PC-9 (cell line): ENCODE measurements at regions of chr12 and their contacts with region 1.

Region 1: GRCh38 chr12:122225683-122226407 is at the start of gene DIABLO:
- DNase-seq: peak; percentile 96 to 100
- H3K4me3 ChIP-seq: peak within 1 kb of the TSS; percentile 97
- H3K27ac ChIP-seq: peak within 1 kb of the TSS; percentile 74
- H3K4me1 ChIP-seq: peaks cover 21% of the 10 kb centered on the region
- H3K27me3 ChIP-seq: no peaks in the 10 kb centered on the region
- CTCF ChIP-seq: no peak
- total RNA-seq, gene DIABLO: 47.9 and 51.7 TPM in 2 replicates

Region 2: DNA sequence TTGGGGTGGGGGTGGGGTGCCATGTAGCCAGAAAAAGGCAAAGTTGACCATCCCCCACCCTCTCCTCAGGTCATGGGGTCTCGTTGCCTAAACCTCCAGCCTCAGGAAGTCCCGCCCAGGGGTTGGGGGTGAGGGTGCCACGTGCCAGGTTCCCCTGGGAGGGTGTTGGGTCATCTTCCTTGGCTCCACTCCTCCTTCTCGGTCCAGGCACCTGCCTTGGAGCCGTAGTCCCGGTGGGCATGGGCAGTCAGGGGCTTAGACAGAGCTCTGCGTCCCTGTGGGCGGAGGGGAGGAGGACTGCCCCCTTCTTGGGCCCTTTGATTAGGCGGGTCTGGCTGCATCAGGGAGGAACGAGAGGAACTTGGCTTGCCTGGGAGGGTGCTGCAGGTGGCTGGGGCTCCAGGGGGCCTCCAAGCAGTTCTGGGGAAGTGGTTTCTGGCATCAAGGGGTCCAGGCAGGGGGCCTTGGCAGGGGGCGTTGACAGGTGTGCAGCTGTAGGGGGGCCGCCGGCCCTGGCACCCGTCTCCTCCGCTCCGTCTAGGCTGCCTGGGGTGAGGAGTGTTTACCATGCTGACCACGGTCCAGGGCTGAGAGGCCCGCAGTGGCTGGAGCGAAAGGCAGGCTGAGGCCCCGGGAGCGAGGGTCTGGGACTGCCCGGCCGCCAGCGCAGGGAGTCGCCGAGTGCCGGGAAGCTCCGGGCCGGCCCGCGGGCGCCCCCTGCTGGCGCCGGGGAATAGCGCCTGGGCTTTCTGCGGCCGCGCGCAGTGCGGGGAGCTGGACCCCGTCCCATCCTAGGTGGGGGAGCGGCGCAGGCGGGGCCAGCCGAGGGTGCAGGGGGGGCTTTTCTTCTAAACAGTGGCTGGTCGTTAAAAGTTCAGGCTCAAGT is 414.2 kb before region 1 on chr12:
- CTCF ChIA-PET with region 1: interaction called, 10 read pairs
- POLR2A ChIA-PET with region 1: no interaction called
- intact Hi-C with region 1: no loop called
- DNase-seq: peak in 1 of 2 experiments; percentile 80
- H3K4me3 ChIP-seq: peak overlapping the region; percentile 65
- H3K27ac ChIP-seq: 0 out of 2 replicates have a peak overlapping the region, but pooled peaks have one; percentile 37
- H3K4me1 ChIP-seq: peaks cover 16% of the 10 kb centered on the region
- H3K27me3 ChIP-seq: no peaks in the 10 kb centered on the region
- CTCF ChIP-seq: peak; percentile 92

Region 3: GRCh38 chr12:121858662-121859572 is 366.9 kb before region 1 on chr12 and contains the start of gene HPD:
- CTCF ChIA-PET with region 1: no interaction called
- POLR2A ChIA-PET with region 1: no interaction called
- intact Hi-C with region 1: no loop called
- DNase-seq: peak; percentile 40 to 55
- H3K4me3 ChIP-seq: no peak within 1 kb of the TSS
- H3K27ac ChIP-seq: no peak within 1 kb of the TSS
- H3K4me1 ChIP-seq: no peaks in the 10 kb centered on the region
- H3K27me3 ChIP-seq: no peaks in the 10 kb centered on the region
- CTCF ChIP-seq: no peak
- total RNA-seq, gene HPD: 0.35 and 0.92 TPM in 2 replicates

Region 4: GRCh38 chr12:121955258-121956235 is 270.3 kb before region 1 on chr12:
- CTCF ChIA-PET with region 1: no interaction called
- POLR2A ChIA-PET with region 1: interaction called, 46 read pairs
- intact Hi-C with region 1: no loop called
- DNase-seq: no peak
- H3K4me3 ChIP-seq: no peak overlapping the region
- H3K27ac ChIP-seq: no peak overlapping the region
- H3K4me1 ChIP-seq: no peaks in the 10 kb centered on the region
- H3K27me3 ChIP-seq: no peaks in the 10 kb centered on the region
- CTCF ChIP-seq: peak; percentile 65

Region 5: GRCh38 chr12:122244565-122245371 is 18.9 kb after region 1 on chr12:
- CTCF ChIA-PET with region 1: no interaction called
- POLR2A ChIA-PET with region 1: no interaction called
- intact Hi-C with region 1: no loop called
- DNase-seq: no peak
- H3K4me3 ChIP-seq: no peak overlapping the region
- H3K27ac ChIP-seq: no peak overlapping the region
- H3K4me1 ChIP-seq: no peaks in the 10 kb centered on the region
- H3K27me3 ChIP-seq: no peaks in the 10 kb centered on the region
- CTCF ChIP-seq: no peak

Region 6: GRCh38 chr12:122393817-122394216 is 168.0 kb after region 1 on chr12:
- CTCF ChIA-PET with region 1: no interaction called
- POLR2A ChIA-PET with region 1: no interaction called
- intact Hi-C with region 1: no loop called
- DNase-seq: no peak
- H3K4me3 ChIP-seq: no peak overlapping the region
- H3K27ac ChIP-seq: no peak overlapping the region
- H3K4me1 ChIP-seq: peaks cover 5% of the 10 kb centered on the region
- H3K27me3 ChIP-seq: no peaks in the 10 kb centered on the region
- CTCF ChIP-seq: no peak

Region 7: DNA sequence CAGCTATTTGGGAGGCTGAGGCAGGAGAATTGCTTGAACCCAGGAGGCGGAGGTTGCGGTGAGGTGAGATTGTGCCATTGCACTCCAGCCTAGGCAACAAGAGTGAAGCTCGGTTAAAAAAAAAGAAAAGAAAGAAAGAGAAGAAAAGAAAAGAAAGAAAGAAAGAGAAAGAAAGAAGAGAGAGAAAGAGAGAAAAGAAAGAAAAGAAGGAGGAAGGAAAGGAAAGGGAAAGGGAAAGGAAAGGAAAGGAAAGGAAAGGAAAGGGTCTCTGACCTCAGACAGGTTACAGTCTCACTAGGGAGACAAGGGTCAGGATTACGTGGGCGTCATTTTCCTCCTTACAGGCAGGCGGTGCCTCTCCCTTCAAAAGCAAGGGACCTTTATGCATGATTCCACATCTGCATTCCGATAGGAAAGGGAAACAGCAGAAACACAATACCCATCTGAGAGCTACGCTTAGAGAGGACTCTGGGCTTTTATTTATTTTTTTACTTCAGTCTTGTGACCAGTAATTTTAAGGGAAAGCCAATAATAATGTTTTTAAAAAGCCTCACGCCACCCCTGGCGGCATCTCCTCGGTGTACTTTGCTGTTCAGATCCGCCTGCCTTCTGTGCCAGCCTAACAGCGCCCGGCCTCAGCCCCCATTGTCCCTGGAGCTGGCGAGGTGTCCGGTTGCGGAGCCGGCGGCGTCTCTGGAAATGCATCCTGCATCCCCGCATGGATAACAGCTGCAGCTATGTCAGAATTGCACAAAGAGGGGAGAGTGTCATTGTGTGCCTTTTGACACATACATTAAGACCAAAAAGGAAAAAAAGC is 608.5 kb after region 1 on chr12:
- CTCF ChIA-PET with region 1: interaction called, 14 read pairs
- POLR2A ChIA-PET with region 1: no interaction called
- intact Hi-C with region 1: no loop called
- DNase-seq: peak; percentile 67 to 74
- H3K4me3 ChIP-seq: peak overlapping the region; percentile 55; the same call in 1 of the 2 replicates
- H3K27ac ChIP-seq: peak overlapping the region; percentile 70
- H3K4me1 ChIP-seq: peaks cover 39% of the 10 kb centered on the region
- H3K27me3 ChIP-seq: no peaks in the 10 kb centered on the region
- CTCF ChIP-seq: no peak; the same call in 1 of the 2 replicates

Region 8: GRCh38 chr12:123512838-123513665 is 1287.2 kb after region 1 on chr12:
- CTCF ChIA-PET with region 1: no interaction called
- POLR2A ChIA-PET with region 1: no interaction called
- intact Hi-C with region 1: no loop called
- DNase-seq: no peak
- H3K4me3 ChIP-seq: no peak overlapping the region
- H3K27ac ChIP-seq: no peak overlapping the region
- H3K4me1 ChIP-seq: peaks cover 9% of the 10 kb centered on the region
- H3K27me3 ChIP-seq: no peaks in the 10 kb centered on the region
- CTCF ChIP-seq: no peak